ENCODE measurements at regions of chr2 and their contacts with region 1.

Region 1: DNA sequence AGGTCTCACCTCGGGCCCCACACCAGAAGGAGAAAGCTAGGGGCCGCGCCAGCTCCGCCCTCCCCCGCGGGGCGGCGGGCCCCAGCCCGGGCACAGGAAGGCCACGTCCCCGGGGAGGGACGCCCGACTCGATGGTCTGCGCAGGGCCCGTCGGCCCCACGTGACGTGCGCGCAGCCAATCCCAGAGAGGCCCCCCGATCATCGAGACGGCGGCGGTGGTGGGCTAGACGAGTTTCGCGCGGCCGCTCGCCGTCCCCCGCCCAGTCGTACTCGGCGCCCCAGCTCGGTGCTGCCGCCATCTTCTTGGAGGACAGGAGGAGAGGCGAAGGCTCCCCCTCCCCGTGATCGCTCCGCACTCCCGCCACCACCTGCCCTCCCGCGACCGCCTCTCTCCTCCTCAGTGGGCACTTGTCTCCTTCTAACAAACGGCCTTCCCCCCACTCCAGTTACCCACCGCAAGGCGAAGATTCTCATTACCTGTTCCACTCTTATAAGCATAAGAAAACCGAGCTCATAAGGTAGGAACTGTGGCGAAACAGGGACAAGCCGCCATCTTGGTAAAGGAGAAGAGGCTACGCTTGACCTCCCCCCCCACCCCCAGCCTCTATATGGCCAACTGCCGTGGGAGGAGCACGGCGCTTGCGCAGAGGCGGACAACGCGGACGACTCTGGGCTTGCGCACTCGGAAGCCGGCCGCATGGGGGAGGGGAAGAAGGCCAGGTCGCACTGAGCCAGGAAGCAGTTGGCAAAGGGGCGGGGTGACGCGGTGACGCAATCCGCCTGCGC is at the start of gene HDLBP:
- DNase-seq: peak; percentile 100
- H3K4me3 Mint-ChIP-seq: peak within 1 kb of the TSS; percentile 98
- H3K27ac Mint-ChIP-seq: peak within 1 kb of the TSS; percentile 100
- H3K4me1 Mint-ChIP-seq: peaks cover 67% of the 10 kb centered on the region
- H3K27me3 Mint-ChIP-seq: no peaks in the 10 kb centered on the region
- total RNA-seq, gene HDLBP: 243 to 251 TPM

Region 2: GRCh38 chr2:240095556-240096523 is 1219.4 kb before region 1 on chr2:
- CTCF ChIA-PET with region 1: no interaction called
- POLR2A ChIA-PET with region 1: no interaction called
- intact Hi-C with region 1: no loop called
- DNase-seq: no peak
- H3K4me3 Mint-ChIP-seq: no peak overlapping the region
- H3K27ac Mint-ChIP-seq: no peak overlapping the region
- H3K4me1 Mint-ChIP-seq: no peaks in the 10 kb centered on the region
- H3K27me3 Mint-ChIP-seq: peaks cover 66% of the 10 kb centered on the region

Region 3: DNA sequence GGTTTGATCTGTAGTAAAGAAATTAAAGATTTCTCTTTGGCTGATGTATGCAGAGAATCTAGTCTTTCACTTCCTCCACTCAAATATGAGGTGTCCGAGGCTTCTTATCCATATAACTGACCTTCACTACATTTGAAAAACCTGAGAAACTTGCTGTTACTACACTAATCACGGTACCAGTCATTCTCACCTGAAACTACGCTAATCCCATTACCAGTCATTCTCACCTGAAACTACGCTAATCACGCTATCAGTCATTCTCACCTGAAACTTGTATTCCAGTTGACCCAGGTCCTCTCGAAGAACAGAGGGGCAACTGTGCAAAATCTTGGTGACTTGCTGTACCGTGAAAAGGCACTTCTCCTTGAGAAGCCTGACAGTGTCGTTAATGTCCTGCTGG is 218.3 kb before region 1 on chr2:
- CTCF ChIA-PET with region 1: no interaction called
- POLR2A ChIA-PET with region 1: no interaction called
- intact Hi-C with region 1: loop called (anchors 10 kb)
- DNase-seq: peak; percentile 50
- H3K4me3 Mint-ChIP-seq: peak overlapping the region; percentile 17
- H3K27ac Mint-ChIP-seq: peak overlapping the region; percentile 89
- H3K4me1 Mint-ChIP-seq: peaks cover 72% of the 10 kb centered on the region
- H3K27me3 Mint-ChIP-seq: no peaks in the 10 kb centered on the region

Region 4: GRCh38 chr2:241339839-241340630 is 24.7 kb after region 1 on chr2:
- CTCF ChIA-PET with region 1: no interaction called
- POLR2A ChIA-PET with region 1: interaction called, 3 read pairs
- intact Hi-C with region 1: loop called (anchors 2 kb)
- DNase-seq: no peak
- H3K4me3 Mint-ChIP-seq: no peak overlapping the region
- H3K27ac Mint-ChIP-seq: peak overlapping the region; percentile 70
- H3K4me1 Mint-ChIP-seq: peaks cover 39% of the 10 kb centered on the region
- H3K27me3 Mint-ChIP-seq: no peaks in the 10 kb centered on the region

Region 5: GRCh38 chr2:241609859-241610793 is 294.8 kb after region 1 on chr2:
- CTCF ChIA-PET with region 1: no interaction called
- POLR2A ChIA-PET with region 1: no interaction called
- intact Hi-C with region 1: loop called (anchors 2 kb)
- DNase-seq: peak; percentile 94
- H3K4me3 Mint-ChIP-seq: peak overlapping the region; percentile 46
- H3K27ac Mint-ChIP-seq: no peak overlapping the region
- H3K4me1 Mint-ChIP-seq: peaks cover 14% of the 10 kb centered on the region
- H3K27me3 Mint-ChIP-seq: no peaks in the 10 kb centered on the region

Region 6: DNA sequence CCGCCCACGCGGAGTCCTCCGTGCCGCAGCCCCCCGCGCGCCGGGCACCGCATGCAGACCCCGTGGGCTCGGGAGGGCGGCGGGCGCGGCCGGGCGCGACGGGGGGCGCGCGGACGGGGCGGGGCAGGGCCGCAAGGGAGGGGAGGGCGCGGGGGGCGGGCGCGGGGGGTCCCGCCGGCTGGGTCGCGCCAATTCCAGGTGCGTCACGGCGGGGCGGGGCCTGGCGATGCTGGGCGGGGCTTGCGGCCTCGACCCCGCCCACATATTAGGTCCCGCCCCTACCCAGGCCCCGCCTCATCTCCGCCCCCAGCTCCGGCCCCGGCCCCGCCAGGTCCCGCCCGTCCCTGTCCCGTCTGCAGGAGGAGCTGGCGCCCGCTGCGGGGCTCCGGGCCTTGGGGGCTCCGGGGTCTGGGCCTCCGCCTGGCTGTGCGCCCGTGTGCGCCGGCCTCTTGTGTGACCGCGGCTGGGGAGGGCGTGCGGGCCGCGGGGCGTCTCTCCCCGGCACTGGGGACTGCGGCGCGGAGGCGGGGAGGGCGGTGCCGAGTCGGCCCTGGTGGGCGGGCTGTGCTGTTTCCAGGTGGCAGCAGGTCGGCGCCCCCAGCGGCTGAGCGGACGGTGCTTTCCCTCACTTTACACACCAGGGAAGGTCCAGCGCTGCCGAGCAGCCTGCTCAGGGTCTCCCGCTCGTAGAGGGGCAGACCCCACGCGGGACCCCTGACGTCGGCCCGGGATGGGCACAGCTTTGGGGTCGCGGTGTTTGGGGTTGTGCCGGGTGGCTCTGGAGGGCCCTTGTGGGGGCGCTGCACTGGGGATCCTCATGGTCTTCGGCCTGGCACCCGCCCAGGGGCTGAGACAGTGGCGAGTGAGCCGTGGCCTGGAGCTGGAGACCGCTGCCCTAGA is 387.1 kb after region 1 on chr2:
- CTCF ChIA-PET with region 1: no interaction called
- POLR2A ChIA-PET with region 1: no interaction called
- intact Hi-C with region 1: loop called (anchors 5 kb)
- DNase-seq: peak; percentile 90
- H3K4me3 Mint-ChIP-seq: peak overlapping the region; percentile 84
- H3K27ac Mint-ChIP-seq: peak overlapping the region; percentile 63
- H3K4me1 Mint-ChIP-seq: peaks cover 25% of the 10 kb centered on the region
- H3K27me3 Mint-ChIP-seq: no peaks in the 10 kb centered on the region